Heart right ventricle (tissue), 16 donors: ENCODE measurements at regions of chr12 and their contacts with region 1.

Region 1: DNA sequence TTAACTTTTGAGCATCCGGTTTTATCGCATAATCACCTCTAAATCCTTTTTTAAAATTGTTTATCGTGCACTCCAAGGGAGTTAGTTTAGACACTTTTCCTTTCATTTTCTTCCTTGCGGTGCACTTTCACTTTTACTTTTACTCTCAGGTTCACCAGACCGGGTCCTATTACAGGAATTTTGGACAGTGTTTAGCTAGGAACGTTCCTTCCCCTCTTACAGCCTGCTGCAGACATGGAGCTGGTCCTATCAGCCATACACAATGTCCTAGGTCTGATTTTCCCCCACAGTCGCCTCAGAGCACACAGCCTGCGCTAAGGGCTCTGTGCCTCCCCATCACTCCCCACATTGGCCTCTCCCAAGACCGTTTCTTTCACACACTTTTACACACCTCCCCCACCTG is 103.9 kb downstream of the ALG10 start:
- DNase-seq: no peak
- ATAC-seq: peak in 4 of 8 donors; percentile 41 to 64 (median 60)
- H3K4me3 ChIP-seq: peak overlapping the region in 8 of 10 donors; percentile 2 to 42 (median 32)
- H3K27ac ChIP-seq: peak overlapping the region in 7 of 10 donors; percentile 20 to 71 (median 37)
- H3K4me1 ChIP-seq: peaks cover 0 to 29% (median 0%) of the 10 kb centered on the region in 9 donors
- H3K27me3 ChIP-seq: peaks cover 0 to 6% (median 0%) of the 10 kb centered on the region in 7 donors
- CTCF ChIP-seq: no peak

Region 2: GRCh38 chr12:33926095-33926494 is 200.1 kb before region 1 on chr12:
- intact Hi-C with region 1: no loop called
- DNase-seq: no peak
- ATAC-seq: no peak
- H3K4me3 ChIP-seq: no peak overlapping the region
- H3K27ac ChIP-seq: no peak overlapping the region
- H3K4me1 ChIP-seq: no peaks in the 10 kb centered on the region
- H3K27me3 ChIP-seq: no peaks in the 10 kb centered on the region
- CTCF ChIP-seq: no peak

Region 3: GRCh38 chr12:34218165-34219045 is 92.2 kb after region 1 on chr12:
- intact Hi-C with region 1: loop called (anchors 1 to 5 kb)
- DNase-seq: peak; percentile 37 to 72
- ATAC-seq: peak; percentile 75 to 94 (median 88)
- H3K4me3 ChIP-seq: peak overlapping the region; percentile 37 to 63 (median 52)
- H3K27ac ChIP-seq: peak overlapping the region in 5 of 10 donors; percentile 4 to 75 (median 61)
- H3K4me1 ChIP-seq: peaks cover 0 to 14% (median 4%) of the 10 kb centered on the region in 9 donors
- H3K27me3 ChIP-seq: peaks cover 0 to 15% (median 7%) of the 10 kb centered on the region in 7 donors
- CTCF ChIP-seq: peak; percentile 76 to 98 (median 94)

Region 4: GRCh38 chr12:34625116-34625515 is 498.9 kb after region 1 on chr12:
- intact Hi-C with region 1: loop called in 7 of 10 experiments (anchors 5 to 10 kb)
- DNase-seq: no peak
- ATAC-seq: no peak
- H3K4me3 ChIP-seq: no peak overlapping the region
- H3K27ac ChIP-seq: no peak overlapping the region
- H3K4me1 ChIP-seq: no peaks in the 10 kb centered on the region
- H3K27me3 ChIP-seq: peaks cover 0 to 4% (median 0%) of the 10 kb centered on the region in 7 donors
- CTCF ChIP-seq: peak in 6 of 9 donors; percentile 21 to 58 (median 40)